Astrocyte of the cerebellum (primary cell): ENCODE measurements at regions of chr19 and their contacts with region 1.

Region 1: GRCh38 chr19:55599468-55600279 is at the start of gene FIZ1:
- DNase-seq: peak; percentile 98
- H3K4me3 ChIP-seq: peak within 1 kb of the TSS; percentile 80
- CTCF ChIP-seq: no peak

Region 2: GRCh38 chr19:54463531-54464043 is 1136.1 kb before region 1 on chr19 and contains the start of gene LENG9:
- in situ Hi-C with region 1: loop called (anchors 25 kb)
- DNase-seq: peak; percentile 95
- H3K4me3 ChIP-seq: peak within 1 kb of the TSS; percentile 50
- CTCF ChIP-seq: no peak

Region 3: GRCh38 chr19:55653758-55654539 is 54.3 kb after region 1 on chr19:
- in situ Hi-C with region 1: no loop called
- DNase-seq: peak; percentile 99
- H3K4me3 ChIP-seq: peak overlapping the region; percentile 73
- CTCF ChIP-seq: peak; percentile 100